Right ventricle myocardium superior (tissue), 1 donor: ENCODE measurements at regions of chr12 and their contacts with region 1.

Region 1: DNA sequence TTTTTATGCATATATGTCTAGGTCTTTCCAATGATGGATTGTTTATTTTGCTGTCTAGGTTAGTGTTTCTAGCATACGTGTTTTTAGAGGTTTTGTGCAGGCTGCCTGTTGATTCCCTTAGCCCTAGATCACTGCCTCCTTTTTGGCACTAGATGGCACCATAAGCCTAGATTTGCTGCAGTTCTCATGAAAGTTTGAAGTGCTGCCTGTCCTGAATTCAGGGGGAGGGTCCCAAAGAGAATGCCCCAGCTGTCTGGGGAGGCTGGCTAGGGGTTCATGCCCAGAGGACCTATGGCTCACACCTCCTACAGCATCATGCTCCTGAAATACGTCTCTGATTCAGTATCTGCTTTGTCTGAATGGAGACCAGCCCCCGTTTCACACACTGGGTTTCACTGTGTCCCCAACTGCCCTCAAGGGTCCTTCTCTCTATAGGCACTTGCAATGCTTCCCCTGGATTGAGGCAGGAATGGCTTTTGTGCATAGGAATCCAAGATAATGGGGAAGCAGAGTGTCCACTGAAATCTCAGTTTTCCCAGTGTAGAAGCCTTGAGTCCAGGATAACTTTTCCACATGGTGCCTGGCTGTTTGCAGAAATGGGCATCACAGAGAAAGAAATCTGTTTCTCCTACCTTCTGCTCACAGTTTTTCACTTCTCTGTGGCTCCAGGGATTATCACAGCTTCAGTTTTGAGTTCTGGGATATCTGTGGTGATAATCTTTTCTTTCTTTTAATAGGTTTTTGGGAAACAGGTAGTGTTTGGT is 14.2 kb upstream of the TXNRD1 start:
- DNase-seq: no peak
- ATAC-seq: peak; percentile 84

Region 2: DNA sequence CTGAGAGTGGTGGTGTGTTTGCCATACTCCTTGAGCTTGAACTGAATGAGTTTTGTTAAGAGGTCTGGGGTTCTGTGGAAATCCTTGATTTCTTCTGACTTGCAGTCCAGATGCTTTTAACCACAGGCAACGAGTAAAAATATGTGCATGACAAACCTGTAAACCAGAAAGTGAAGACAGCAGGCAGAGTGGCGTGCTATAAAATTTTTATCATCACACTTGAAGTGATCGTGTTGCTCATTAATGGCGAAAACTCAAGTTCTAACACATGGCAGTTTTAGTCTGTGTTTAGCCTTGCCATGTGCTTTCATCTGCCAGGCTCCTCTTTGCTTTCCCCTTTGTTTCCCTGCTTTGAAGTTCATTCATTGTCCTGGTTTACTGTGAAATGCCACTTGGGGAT is 42.1 kb after region 1 on chr12:
- intact Hi-C with region 1: no loop called
- DNase-seq: no peak
- ATAC-seq: no peak

Region 3: GRCh38 chr12:104358347-104359003 is 157.1 kb after region 1 on chr12:
- intact Hi-C with region 1: loop called (anchors 2 kb)
- DNase-seq: peak; percentile 59
- ATAC-seq: peak; percentile 85

Region 4: GRCh38 chr12:105053116-105053572 is 851.7 kb after region 1 on chr12:
- intact Hi-C with region 1: loop called (anchors 10 kb)
- DNase-seq: peak; percentile 74
- ATAC-seq: peak; percentile 82